HEK293T (cell line): ENCODE measurements at regions of chr6 and their contacts with region 1.

Region 1: GRCh38 chr6:96051555-96051954 is 35.8 kb downstream of the FUT9 start:
- DNase-seq: no peak

Region 2: GRCh38 chr6:95923518-95923917 is 128.0 kb before region 1 on chr6:
- CTCF ChIA-PET with region 1: interaction called, 10 read pairs
- POLR2A ChIA-PET with region 1: no interaction called
- DNase-seq: peak; percentile 21

Region 3: DNA sequence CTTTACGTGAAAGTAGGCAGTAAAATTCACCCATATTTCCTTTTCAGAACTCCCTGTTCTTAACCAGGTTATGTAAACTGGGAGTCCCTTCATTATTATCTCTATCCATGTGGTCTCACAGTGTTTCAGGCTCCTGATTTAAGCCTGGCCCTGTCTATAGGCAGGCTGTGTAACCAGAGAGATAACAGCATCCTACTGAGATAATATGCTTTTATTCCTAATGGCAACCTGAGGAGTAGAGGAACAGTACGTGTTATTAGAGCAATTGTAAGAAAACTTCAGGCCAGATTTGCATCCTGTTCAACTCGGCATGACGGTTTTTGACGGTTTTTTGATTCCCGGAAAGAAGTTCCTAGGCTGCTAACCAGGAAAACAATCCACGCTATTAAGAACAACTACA is 18.9 kb before region 1 on chr6:
- CTCF ChIA-PET with region 1: no interaction called
- POLR2A ChIA-PET with region 1: no interaction called
- DNase-seq: no peak